Dorsolateral prefrontal cortex (tissue), 120 donors: ENCODE measurements at regions of chr22 and their contacts with region 1.

Region 1: DNA sequence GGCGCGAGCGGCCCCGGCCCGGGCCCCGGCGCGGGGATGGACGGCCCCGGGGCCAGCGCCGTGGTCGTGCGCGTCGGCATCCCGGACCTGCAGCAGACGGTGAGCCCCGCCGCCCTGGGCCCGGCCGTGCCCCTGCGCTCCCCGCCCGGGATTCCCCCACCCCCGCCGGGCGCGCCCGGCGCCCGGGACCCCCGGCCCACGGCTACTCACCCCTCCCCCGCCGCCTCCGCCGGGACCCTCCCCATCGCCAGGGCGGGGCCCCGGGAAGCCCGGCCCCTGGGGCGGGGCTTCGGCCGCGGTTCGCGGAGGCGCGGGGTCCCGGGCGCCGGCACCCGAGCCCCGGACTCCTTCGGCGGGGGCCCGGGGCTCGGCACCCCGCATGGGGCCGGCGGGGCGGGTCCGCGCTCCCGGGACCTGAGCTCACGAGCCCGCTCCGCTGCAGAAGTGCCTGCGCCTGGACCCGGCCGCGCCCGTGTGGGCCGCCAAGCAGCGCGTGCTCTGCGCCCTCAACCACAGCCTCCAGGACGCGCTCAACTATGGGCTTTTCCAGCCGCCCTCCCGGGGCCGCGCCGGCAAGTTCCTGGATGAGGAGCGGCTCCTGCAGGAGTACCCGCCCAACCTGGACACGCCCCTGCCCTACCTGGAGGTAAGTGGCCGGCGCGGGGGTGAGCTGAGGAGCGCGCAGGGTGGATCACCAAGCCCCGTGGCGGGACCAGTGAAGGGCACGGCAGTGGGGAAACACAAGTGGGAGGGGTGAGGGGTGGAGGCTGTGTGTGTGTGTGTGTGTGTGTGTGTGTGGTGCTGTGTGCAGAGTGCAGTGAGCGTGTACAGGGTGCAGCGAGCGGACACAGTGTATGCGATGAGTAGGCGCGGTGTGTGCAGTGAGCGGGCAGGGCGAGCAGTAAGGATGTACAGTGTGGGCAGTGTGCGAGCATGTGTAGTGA is 2.3 kb downstream of the SHANK3 start:
- DNase-seq: peak in 3 of 10 donors; percentile 33 to 58 (median 48)
- H3K4me3 ChIP-seq: peak overlapping the region; percentile 15 to 74 (median 63)
- H3K27ac ChIP-seq: peak overlapping the region in 4 of 59 donors; percentile 33 to 61 (median 56)
- H3K27me3 ChIP-seq: peaks cover 0 to 16% (median 0%) of the 10 kb centered on the region in 45 donors
- CTCF ChIP-seq: no peak

Region 2: GRCh38 chr22:50635591-50635990 is 39.3 kb before region 1 on chr22:
- intact Hi-C with region 1: loop called in 1 of 2 experiments (anchors 5 kb)
- DNase-seq: no peak
- H3K4me3 ChIP-seq: no peak overlapping the region
- H3K27ac ChIP-seq: no peak overlapping the region
- H3K27me3 ChIP-seq: no peaks in the 10 kb centered on the region
- CTCF ChIP-seq: no peak